ENCODE measurements at regions of chr6 and their contacts with region 1.

Region 1: DNA sequence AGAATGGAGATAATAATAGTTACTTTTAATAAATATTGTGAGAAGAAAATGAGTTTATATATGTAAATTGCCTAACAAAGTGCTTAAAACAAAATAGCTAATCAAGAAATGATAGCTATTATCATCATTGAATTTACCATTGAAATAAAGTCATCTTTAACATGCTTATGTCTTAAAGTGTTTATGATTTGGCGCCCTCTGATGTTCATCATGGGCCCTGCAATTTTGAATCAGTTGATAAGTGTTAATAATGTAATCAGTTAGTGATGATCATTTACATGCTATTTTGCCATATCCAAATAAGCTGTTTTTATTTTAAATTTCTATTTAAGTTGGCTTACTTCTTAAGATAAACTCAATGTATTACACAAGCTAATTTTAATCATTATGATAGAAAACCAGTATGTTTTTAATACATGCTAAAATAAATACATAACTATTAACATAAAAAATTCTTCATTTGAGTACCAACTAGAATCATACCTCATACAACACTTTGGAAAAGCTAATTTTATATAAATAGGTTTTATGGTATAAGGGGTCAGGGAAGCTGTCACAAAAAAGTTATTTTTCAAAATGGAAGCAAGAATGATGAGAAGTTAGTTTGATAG is 39.2 kb upstream of the TPD52L1 start:
- H3K4me3 Mint-ChIP-seq: no peak overlapping the region
- H3K27ac Mint-ChIP-seq: no peak overlapping the region
- H3K4me1 Mint-ChIP-seq: no peaks in the 10 kb centered on the region
- H3K27me3 Mint-ChIP-seq: no peaks in the 10 kb centered on the region

Region 2: DNA sequence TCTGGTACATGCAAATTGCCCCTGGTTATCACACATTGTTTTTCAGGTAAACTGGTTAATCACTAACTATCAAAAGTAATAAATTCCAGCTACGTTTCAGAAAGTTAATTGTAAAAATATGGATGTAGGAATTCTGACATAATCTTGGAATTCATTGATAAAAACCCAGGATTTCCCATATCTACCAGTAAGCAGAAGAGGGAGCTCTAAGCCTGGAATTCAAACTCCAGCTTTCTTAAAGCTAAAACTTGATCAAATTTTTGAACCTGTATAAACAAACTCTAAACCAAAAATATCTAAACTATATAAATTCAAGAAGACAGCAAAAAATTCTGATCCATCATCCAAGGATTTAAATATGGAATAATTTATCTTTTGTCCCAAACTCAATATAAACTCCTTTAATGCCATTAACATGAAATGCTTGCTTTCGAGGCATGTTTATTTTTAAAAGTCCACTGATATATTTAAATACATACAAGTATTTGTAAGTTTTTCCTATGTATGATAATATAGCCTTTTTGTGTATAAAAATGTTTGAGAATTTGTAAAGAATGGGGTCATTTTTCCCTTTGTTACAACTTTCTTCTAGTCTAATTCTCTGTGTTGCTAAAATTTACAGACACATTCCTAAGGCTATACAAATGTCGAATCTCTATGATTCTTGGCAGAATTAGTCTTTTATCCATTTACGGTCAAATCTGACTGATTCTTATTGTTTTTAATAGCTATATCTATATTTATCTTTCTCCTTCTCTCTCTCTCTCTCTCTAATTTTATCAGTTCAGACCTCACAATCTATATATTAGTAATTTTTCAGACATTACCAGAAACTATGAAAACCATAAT is 243.5 kb before region 1 on chr6:
- intact Hi-C with region 1: loop called (anchors 1 kb)
- H3K4me3 Mint-ChIP-seq: no peak overlapping the region
- H3K27ac Mint-ChIP-seq: no peak overlapping the region
- H3K4me1 Mint-ChIP-seq: no peaks in the 10 kb centered on the region
- H3K27me3 Mint-ChIP-seq: no peaks in the 10 kb centered on the region

Region 3: DNA sequence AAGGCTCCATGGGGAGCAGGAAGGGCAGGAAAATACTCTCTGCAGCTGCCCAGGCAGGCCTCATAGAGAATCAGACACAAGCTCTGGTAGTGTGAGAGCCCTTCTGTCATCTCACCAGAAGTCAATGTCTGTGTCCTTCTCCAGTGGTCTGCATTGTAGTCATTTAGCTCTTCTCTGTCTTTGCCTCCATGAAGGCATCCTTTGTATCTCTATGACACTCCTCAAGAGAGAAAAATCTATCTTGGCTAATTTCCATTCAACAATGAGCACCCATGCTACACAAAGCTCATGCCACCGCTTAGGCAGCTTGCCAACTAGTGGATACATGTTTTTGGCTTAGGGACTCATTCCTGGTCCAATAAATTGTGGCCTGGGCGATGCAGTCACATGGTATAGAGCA is 60.0 kb before region 1 on chr6:
- intact Hi-C with region 1: no loop called
- H3K4me3 Mint-ChIP-seq: no peak overlapping the region
- H3K27ac Mint-ChIP-seq: no peak overlapping the region
- H3K4me1 Mint-ChIP-seq: no peaks in the 10 kb centered on the region
- H3K27me3 Mint-ChIP-seq: no peaks in the 10 kb centered on the region

Region 4: GRCh38 chr6:125363039-125363823 is 248.9 kb after region 1 on chr6:
- intact Hi-C with region 1: no loop called
- H3K4me3 Mint-ChIP-seq: no peak overlapping the region
- H3K27ac Mint-ChIP-seq: no peak overlapping the region
- H3K4me1 Mint-ChIP-seq: no peaks in the 10 kb centered on the region
- H3K27me3 Mint-ChIP-seq: peaks cover 57% of the 10 kb centered on the region